ENCODE measurements at regions of chr9 and their contacts with region 1.

Region 1: DNA sequence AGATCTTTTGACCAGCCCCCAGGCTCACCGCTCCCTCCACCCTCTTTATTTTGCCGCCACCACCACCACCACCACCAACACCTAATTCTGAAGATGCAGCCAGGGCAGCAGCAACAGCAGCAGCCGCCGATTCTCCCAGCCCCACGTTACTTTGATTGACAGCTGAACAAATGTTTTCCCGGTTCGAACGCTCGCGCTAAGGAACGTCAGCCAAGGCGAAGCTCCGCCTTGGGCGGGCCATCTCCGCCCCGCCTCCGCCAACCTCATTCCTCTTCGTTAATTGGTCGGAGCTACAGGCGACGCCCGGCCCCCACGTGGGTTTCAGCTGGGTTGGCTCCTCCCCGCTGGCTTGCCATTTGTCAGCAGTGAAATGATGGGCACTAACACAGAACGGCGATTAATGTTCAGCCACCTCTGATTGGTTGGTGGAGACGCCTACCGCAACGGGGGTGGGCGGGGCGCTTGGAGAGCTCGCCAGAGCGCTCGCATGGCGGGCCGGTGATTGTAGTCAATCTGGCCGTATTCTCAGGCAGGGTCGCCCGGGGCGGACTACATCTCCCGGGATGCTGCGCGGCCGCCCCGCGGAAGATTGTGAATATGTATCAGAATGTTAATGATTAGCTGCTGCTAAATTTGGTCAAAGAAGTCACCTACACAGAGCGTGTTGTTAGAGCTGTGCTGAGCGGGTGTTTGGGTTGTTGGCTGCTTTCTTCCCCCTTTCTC is at the start of gene TLE4:
- DNase-seq: peak; percentile 96 to 100 (median 100)
- ATAC-seq: peak; percentile 80 to 84
- H3K4me3 Mint-ChIP-seq: peak within 1 kb of the TSS in 8 of 10 donors; percentile 28 to 93 (median 86)
- H3K27ac Mint-ChIP-seq: peak within 1 kb of the TSS in 7 of 10 donors; percentile 49 to 98 (median 91)
- H3K4me1 Mint-ChIP-seq: peaks cover 20 to 37% (median 29%) of the 10 kb centered on the region in 4 donors
- H3K27me3 Mint-ChIP-seq: peaks cover 0 to 3% (median 0%) of the 10 kb centered on the region in 5 donors
- polyA plus RNA-seq, gene TLE4: 25.3 to 37.8 (median 35.6) TPM

Region 2: DNA sequence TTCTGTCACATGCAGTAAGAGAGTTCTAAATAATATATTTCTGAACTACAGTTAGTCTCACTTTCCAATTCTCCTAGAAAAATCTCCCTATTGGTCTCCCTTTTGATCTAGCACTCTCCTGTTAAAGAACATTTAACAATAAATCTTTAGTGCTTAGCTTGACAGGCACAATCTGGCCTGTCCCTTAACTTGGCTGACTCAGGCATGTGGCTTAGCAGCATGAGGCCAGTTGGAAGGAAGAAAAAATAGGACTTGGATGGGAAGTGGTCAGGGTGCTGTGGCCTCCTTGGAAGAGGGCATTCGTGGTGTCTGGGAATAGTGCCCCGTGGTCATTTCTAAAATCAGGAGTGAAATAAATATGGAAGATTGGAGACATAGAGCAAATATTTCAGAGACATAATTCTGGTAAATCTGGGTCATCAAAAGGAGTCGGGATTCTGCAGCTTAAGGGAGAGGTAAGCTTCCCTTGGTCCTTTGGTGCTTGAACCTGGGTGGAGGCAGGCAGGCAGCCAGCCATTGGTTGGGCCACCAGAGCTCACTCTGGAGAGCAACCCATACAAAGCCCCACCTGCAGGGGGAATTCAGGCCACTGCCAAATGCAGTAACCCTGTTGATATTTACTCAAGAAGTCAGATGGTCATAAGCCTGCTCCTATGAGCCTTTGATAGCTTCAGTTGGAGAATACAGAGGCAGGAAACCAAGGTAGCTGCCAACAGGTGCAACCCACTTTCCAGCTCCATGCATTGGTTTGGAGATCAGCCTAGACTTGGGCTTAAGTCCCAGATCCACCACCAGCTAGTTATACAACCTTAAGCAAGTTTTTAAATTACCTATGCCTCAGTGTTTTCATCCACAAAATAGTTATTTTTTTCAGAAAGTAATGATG is 28.5 kb before region 1 on chr9:
- POLR2A ChIA-PET with region 1: interaction called, 12 read pairs
- DNase-seq: no peak
- ATAC-seq: no peak
- H3K4me3 Mint-ChIP-seq: peak overlapping the region in 1 of 10 donors; percentile 30
- H3K27ac Mint-ChIP-seq: peak overlapping the region in 4 of 10 donors; percentile 9 to 91 (median 68)
- H3K4me1 Mint-ChIP-seq: peaks cover 13 to 27% (median 24%) of the 10 kb centered on the region in 4 donors
- H3K27me3 Mint-ChIP-seq: peaks cover 0 to 2% (median 0%) of the 10 kb centered on the region in 5 donors

Region 3: GRCh38 chr9:79583952-79584654 is 12.6 kb after region 1 on chr9:
- POLR2A ChIA-PET with region 1: interaction called, 75 read pairs
- DNase-seq: peak in 2 of 10 donors; percentile 5 to 21
- ATAC-seq: peak; percentile 18 to 41
- H3K4me3 Mint-ChIP-seq: peak overlapping the region; percentile 36 to 75 (median 70)
- H3K27ac Mint-ChIP-seq: peak overlapping the region; percentile 49 to 93 (median 80)
- H3K4me1 Mint-ChIP-seq: peaks cover 48 to 89% (median 84%) of the 10 kb centered on the region in 4 donors
- H3K27me3 Mint-ChIP-seq: no peaks in the 10 kb centered on the region

Region 4: GRCh38 chr9:79623799-79624721 is 52.6 kb after region 1 on chr9:
- POLR2A ChIA-PET with region 1: interaction called, 12 read pairs
- DNase-seq: peak in 4 of 10 donors; percentile 2 to 51 (median 30)
- ATAC-seq: peak; percentile 71 to 81
- H3K4me3 Mint-ChIP-seq: peak overlapping the region; percentile 61 to 88 (median 74)
- H3K27ac Mint-ChIP-seq: peak overlapping the region; percentile 4 to 90 (median 84)
- H3K4me1 Mint-ChIP-seq: peaks cover 37 to 76% (median 60%) of the 10 kb centered on the region in 4 donors
- H3K27me3 Mint-ChIP-seq: no peaks in the 10 kb centered on the region

Region 5: GRCh38 chr9:79883073-79883645 is 311.7 kb after region 1 on chr9:
- POLR2A ChIA-PET with region 1: interaction called, 15 read pairs
- DNase-seq: peak; percentile 11 to 84 (median 68)
- ATAC-seq: peak; percentile 99 to 100
- H3K4me3 Mint-ChIP-seq: peak overlapping the region; percentile 64 to 88 (median 78)
- H3K27ac Mint-ChIP-seq: peak overlapping the region in 2 of 10 donors; percentile 54 to 82
- H3K4me1 Mint-ChIP-seq: peaks cover 39 to 77% (median 66%) of the 10 kb centered on the region in 4 donors
- H3K27me3 Mint-ChIP-seq: no peaks in the 10 kb centered on the region

Region 6: DNA sequence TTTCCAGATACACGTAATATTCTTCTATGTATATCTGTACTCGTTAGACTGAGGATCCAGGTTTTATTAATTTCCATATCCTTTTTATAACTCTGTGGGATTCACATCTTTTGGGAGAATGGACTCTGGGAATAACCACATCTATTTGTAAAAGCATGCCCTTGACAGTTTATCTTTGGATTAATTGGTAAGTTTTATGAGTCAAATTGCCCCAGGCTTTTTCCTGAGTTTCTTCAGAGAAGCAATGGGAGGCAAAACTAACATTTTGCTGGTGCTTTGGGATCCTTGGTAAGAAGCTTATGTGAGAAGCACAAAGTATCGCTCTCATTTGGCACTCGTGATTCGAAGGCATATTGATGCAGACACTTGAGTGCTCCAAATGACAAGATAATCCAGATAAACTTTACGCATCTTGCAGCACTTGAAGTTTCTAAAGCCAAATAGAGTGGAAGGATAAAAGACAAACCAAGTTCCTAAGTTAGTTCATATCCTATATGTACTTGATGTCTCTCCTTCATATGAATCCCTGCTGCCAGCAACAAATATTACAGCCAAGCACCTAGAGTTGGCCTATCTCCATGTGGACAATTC is 325.0 kb after region 1 on chr9:
- POLR2A ChIA-PET with region 1: no interaction called
- DNase-seq: no peak
- ATAC-seq: no peak
- H3K4me3 Mint-ChIP-seq: no peak overlapping the region
- H3K27ac Mint-ChIP-seq: no peak overlapping the region
- H3K4me1 Mint-ChIP-seq: peaks cover 0 to 10% (median 0%) of the 10 kb centered on the region in 4 donors
- H3K27me3 Mint-ChIP-seq: peaks cover 0 to 3% (median 0%) of the 10 kb centered on the region in 5 donors

Measured in naive thymus-derived CD8-positive, alpha-beta T cell (primary cell).